ENCODE measurements at regions of chr3 and their contacts with region 1.

Region 1: DNA sequence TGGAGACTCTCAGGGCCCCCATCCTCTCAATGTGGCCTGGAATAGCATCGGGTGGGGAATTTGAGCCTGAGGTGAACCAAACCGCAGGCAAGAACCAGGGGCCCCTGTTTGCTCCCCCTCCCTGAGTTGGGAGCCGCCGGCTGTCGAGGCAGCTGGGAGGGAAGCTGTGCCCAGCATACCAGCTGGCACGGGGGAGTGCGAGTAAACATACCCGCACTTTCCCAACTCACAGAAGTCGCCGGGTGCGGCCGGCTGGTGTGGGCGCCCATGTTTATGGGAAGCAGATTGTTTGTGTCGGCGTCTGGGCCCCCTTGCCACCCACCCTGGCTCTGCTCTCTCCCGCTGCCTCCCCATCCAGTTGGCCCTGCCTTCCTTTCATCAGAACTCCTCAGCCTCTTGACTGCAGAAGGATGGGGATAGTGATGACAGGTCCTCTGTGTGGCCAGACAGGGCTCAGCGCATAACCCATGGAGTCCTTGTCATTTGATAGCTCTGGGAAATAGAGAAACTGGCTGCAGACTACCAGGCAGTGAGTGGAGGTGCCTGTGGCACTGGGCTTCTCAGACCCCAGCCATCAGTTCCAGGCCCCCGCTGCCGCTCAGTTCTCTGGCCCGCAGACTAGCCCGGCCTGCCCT is 60.4 kb downstream of the CACNA2D2 start:
- DNase-seq: no peak
- ATAC-seq: peak in 3 of 4 donors; percentile 30 to 57 (median 38)
- H3K4me3 ChIP-seq: no peak overlapping the region
- H3K27ac ChIP-seq: no peak overlapping the region
- H3K4me1 ChIP-seq: no peaks in the 10 kb centered on the region
- H3K27me3 ChIP-seq: no peaks in the 10 kb centered on the region
- CTCF ChIP-seq: no peak

Region 2: DNA sequence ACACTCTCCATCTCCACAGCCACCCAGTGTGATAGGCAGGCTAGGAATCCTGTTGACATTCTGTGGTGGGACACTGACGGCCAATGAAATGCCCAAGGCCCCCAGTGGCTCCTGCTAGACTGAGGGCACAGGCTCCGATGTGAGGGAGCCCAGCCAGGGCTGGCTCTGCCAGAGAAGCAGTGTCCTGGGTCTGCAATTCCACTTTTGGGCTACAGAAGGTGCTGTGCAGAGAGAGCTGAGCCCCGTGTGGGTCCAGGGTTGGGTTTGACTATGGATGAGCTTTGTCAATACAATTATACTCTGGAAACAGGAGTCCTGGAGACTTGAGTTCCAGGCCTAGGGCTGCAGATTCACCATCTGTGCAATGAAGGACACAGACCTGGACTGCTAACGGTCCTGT is 28.0 kb before region 1 on chr3:
- intact Hi-C with region 1: loop called in 1 of 2 experiments (anchors 2 kb)
- DNase-seq: no peak
- ATAC-seq: no peak
- H3K4me3 ChIP-seq: no peak overlapping the region
- H3K27ac ChIP-seq: no peak overlapping the region
- H3K4me1 ChIP-seq: no peaks in the 10 kb centered on the region
- H3K27me3 ChIP-seq: no peaks in the 10 kb centered on the region
- CTCF ChIP-seq: no peak

Region 3: DNA sequence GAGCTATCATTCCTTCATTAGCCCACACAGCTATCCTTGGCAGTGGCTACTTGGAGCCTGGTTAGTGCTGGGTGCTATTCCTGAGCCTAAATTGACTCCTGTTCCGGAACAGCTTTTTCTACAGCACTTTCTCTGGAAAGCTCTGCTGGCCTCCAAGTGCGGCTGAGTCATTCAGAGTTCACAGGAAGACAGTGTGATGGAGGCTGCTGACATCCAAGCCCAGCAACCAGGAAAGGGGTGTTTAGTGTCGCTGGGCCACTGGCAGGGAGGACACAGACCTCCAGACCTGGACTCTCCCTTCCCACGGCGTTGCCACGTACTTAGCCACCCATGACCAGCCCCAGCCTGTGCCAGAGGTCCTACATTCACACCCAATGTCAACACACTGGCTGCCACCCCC is 31.7 kb after region 1 on chr3:
- intact Hi-C with region 1: no loop called
- DNase-seq: no peak
- ATAC-seq: peak; percentile 24 to 66 (median 42)
- H3K4me3 ChIP-seq: no peak overlapping the region
- H3K27ac ChIP-seq: no peak overlapping the region
- H3K4me1 ChIP-seq: peaks cover 7% of the 10 kb centered on the region
- H3K27me3 ChIP-seq: no peaks in the 10 kb centered on the region
- CTCF ChIP-seq: no peak

Measured in psoas muscle (tissue), 8 donors.